PC-3 (cell line): ENCODE measurements at regions of chr16 and their contacts with region 1.

Region 1: DNA sequence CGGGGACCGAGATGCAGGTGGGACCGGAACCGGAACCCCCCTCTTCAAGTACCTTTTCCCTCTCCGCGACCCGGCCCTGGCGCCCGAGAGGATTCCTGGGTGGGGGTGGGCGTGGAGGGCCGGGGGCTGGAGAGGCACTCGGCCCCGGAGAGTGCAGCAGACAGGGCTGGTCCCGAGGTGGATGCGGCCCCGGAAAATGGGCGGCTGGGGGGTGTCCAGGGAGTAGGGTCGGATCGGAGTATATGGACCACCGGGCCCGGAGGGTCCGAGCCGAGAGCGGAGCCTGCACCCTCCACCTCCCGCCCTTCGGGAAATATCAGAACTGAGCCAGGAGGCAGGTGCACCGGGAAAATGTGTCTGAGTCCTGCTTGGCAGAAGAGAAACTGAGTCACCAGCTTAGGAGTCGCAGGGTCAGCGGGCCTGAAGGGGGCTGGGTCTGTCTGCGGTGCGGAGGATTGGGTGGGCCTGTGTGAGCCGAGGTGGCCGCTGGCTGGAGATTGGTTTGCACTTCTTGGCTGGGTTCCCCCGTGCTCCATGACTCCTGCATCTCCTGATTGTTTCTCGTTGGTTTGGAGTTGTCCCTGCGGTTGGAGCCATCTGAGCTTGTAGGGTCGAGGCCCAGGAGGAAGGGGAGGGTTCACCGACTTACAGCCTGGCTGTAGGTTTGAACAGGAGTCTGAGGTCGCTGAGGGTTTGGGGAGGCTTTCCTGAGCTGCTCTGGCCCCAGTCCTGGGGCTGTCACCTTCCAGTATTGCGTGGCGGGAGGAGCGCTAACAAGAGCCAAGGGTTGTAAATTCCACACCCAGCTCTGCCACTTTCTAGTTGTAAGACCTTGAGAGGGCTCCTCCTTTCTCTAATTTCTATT is 518 bp downstream of the SH2B1 start:
- DNase-seq: no peak
- ATAC-seq: no peak; the same call in 1 of the 2 replicates
- H3K4me3 ChIP-seq: peak overlapping the region; percentile 90
- H3K27ac ChIP-seq: peak overlapping the region; percentile 84
- H3K4me1 ChIP-seq: peaks cover 14% of the 10 kb centered on the region
- H3K27me3 ChIP-seq: no peaks in the 10 kb centered on the region
- CTCF ChIP-seq: no peak

Region 2: GRCh38 chr16:28846080-28846932 is 17.9 kb before region 1 on chr16 and contains the start of gene TUFM:
- CTCF ChIA-PET with region 1: no interaction called
- POLR2A ChIA-PET with region 1: no interaction called
- intact Hi-C with region 1: loop called (anchors 1 kb)
- DNase-seq: peak; percentile 95
- ATAC-seq: peak; percentile 91
- H3K4me3 ChIP-seq: peak within 1 kb of the TSS; percentile 100
- H3K27ac ChIP-seq: peak within 1 kb of the TSS; percentile 49
- H3K4me1 ChIP-seq: 0 out of 2 replicates have a peak, but pooled peaks cover 7% of the 10 kb centered on the region
- H3K27me3 ChIP-seq: no peaks in the 10 kb centered on the region
- CTCF ChIP-seq: peak; percentile 58
- total RNA-seq, gene TUFM: 185 and 198 TPM in 2 replicates